ENCODE measurements at regions of chr2 and their contacts with region 1.

Region 1: DNA sequence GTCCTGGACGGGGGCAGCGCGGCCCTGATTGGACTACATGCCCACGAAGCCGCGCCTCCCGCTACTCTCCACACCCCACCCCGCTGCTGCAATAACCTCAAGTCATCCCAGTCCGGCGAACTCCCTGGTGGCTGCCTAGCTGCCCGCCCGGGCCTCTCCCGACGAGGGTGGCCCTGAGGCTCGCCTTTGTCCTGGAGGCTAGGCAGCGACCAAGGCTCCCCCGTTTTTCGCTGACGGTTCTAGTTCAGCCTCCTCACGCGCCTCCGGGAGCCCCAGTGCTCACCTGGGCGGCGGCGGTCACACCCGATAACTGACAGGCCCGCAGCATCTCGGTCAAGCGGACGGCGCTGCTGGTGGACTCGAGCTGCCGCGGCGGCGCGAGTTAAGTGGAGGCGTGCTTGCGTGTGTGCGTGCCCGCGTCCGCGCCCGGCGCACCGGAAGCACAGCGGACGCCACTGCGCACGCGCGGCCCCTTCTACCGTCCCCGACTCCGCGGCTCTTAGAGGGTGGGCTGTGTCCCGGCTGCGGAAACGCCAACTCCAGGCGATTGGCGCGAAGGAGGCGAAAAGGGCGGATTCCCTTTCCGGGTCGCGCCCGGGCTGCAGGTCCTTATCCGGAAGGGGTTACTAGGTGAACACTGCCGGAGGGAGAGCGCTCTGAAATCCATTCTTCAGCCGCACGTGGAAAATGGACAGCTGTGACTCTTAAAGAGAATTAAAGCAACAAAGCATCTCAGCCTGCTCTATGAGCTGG is at the start of gene IMMT:
- DNase-seq: peak; percentile 67 to 95
- H3K4me3 ChIP-seq: peak within 1 kb of the TSS; percentile 89 to 91
- H3K27ac ChIP-seq: peak within 1 kb of the TSS; percentile 99
- H3K4me1 ChIP-seq: peaks cover 6 to 41% of the 10 kb centered on the region in 2 donors
- H3K27me3 ChIP-seq: no peaks in the 10 kb centered on the region
- CTCF ChIP-seq: no peak
- total RNA-seq, gene IMMT: 97.1 TPM

Region 2: GRCh38 chr2:86105252-86105968 is 89.8 kb before region 1 on chr2 and contains the start of gene POLR1A:
- intact Hi-C with region 1: loop called (anchors 2 kb)
- DNase-seq: peak; percentile 68 to 94
- H3K4me3 ChIP-seq: peak within 1 kb of the TSS; percentile 81 to 91
- H3K27ac ChIP-seq: peak within 1 kb of the TSS; percentile 77 to 78
- H3K4me1 ChIP-seq: peaks cover 0 to 26% of the 10 kb centered on the region in 2 donors
- H3K27me3 ChIP-seq: no peaks in the 10 kb centered on the region
- CTCF ChIP-seq: no peak
- total RNA-seq, gene POLR1A: 8.0 TPM

Measured in ascending aorta (tissue), 2 donors.